GM12878 (cell line): ENCODE measurements at regions of chr16 and their contacts with region 1.

Region 1: GRCh38 chr16:57576429-57576870 is 34.0 kb downstream of the ADGRG5 start:
- DNase-seq: peak; percentile 26
- ATAC-seq: peak; percentile 95
- H3K4me3 ChIP-seq: no peak overlapping the region
- H3K27ac ChIP-seq: no peak overlapping the region
- H3K4me1 ChIP-seq: no peaks in the 10 kb centered on the region
- H3K27me3 ChIP-seq: no peaks in the 10 kb centered on the region
- CTCF ChIP-seq: peak; percentile 98 to 100 (median 99); a peak in 5 of 6 replicates
- EP300 ChIP-seq: no peak
- POLR2A ChIP-seq: peak; percentile 60
- RAD21 ChIP-seq: peak; percentile 97

Region 2: GRCh38 chr16:57544119-57544653 is 32.3 kb before region 1 on chr16:
- CTCF ChIA-PET with region 1: interaction called, 23 read pairs
- POLR2A ChIA-PET with region 1: no interaction called
- RAD21 ChIA-PET with region 1: interaction called, 15 read pairs
- SMC1A ChIA-PET with region 1: interaction called, 23 read pairs
- in situ Hi-C with region 1: no loop called
- intact Hi-C with region 1: no loop called
- DNase-seq: peak; percentile 95
- ATAC-seq: peak; percentile 81
- H3K4me3 ChIP-seq: peak overlapping the region; percentile 98
- H3K27ac ChIP-seq: peak overlapping the region; percentile 94
- H3K4me1 ChIP-seq: peaks cover 43% of the 10 kb centered on the region
- H3K27me3 ChIP-seq: no peaks in the 10 kb centered on the region
- CTCF ChIP-seq: no peak
- EP300 ChIP-seq: peak; percentile 99 to 100
- POLR2A ChIP-seq: peak; percentile 82
- RAD21 ChIP-seq: peak; percentile 23

Region 3: GRCh38 chr16:57564571-57565270 is 11.7 kb before region 1 on chr16:
- CTCF ChIA-PET with region 1: interaction called, 10 read pairs
- POLR2A ChIA-PET with region 1: no interaction called
- RAD21 ChIA-PET with region 1: no interaction called
- SMC1A ChIA-PET with region 1: interaction called, 3 read pairs
- in situ Hi-C with region 1: no loop called
- intact Hi-C with region 1: no loop called
- DNase-seq: no peak
- ATAC-seq: no peak
- H3K4me3 ChIP-seq: no peak overlapping the region
- H3K27ac ChIP-seq: no peak overlapping the region
- H3K4me1 ChIP-seq: no peaks in the 10 kb centered on the region
- H3K27me3 ChIP-seq: no peaks in the 10 kb centered on the region; a peak in 1 of 4 replicates
- CTCF ChIP-seq: no peak
- EP300 ChIP-seq: no peak
- POLR2A ChIP-seq: no peak
- RAD21 ChIP-seq: no peak

Region 4: GRCh38 chr16:57600048-57600835 is 23.8 kb after region 1 on chr16:
- CTCF ChIA-PET with region 1: interaction called, 58 read pairs
- POLR2A ChIA-PET with region 1: interaction called, 5 read pairs
- RAD21 ChIA-PET with region 1: interaction called, 32 read pairs
- SMC1A ChIA-PET with region 1: interaction called, 12 read pairs
- in situ Hi-C with region 1: no loop called
- intact Hi-C with region 1: no loop called
- DNase-seq: no peak
- ATAC-seq: peak; percentile 73
- H3K4me3 ChIP-seq: no peak overlapping the region
- H3K27ac ChIP-seq: peak overlapping the region; percentile 79; the same call in 1 of the 2 replicates
- H3K4me1 ChIP-seq: peaks cover 31% of the 10 kb centered on the region
- H3K27me3 ChIP-seq: no peaks in the 10 kb centered on the region
- CTCF ChIP-seq: peak; percentile 73 to 88 (median 87)
- EP300 ChIP-seq: no peak
- POLR2A ChIP-seq: no peak
- RAD21 ChIP-seq: peak; percentile 80

Region 5: GRCh38 chr16:57628008-57628781 is 51.7 kb after region 1 on chr16 and contains the start of gene ADGRG1:
- CTCF ChIA-PET with region 1: no interaction called
- POLR2A ChIA-PET with region 1: no interaction called
- RAD21 ChIA-PET with region 1: no interaction called
- SMC1A ChIA-PET with region 1: no interaction called
- in situ Hi-C with region 1: no loop called
- intact Hi-C with region 1: no loop called
- DNase-seq: no peak
- ATAC-seq: peak; percentile 55
- H3K4me3 ChIP-seq: no peak within 1 kb of the TSS
- H3K27ac ChIP-seq: no peak within 1 kb of the TSS
- H3K4me1 ChIP-seq: no peaks in the 10 kb centered on the region
- H3K27me3 ChIP-seq: peaks cover 0 to 3% of the 10 kb centered on the region in 2 experiments; a peak in 3 of 4 replicates
- CTCF ChIP-seq: peak in 1 of 3 experiments; percentile 12; a peak in 1 of 6 replicates
- EP300 ChIP-seq: no peak
- POLR2A ChIP-seq: no peak
- RAD21 ChIP-seq: peak; percentile 5; the same call in 1 of the 2 replicates
- polyA plus RNA-seq, gene ADGRG1: 0.16 to 0.23 TPM

Region 6: GRCh38 chr16:57648590-57649442 is 72.4 kb after region 1 on chr16:
- CTCF ChIA-PET with region 1: interaction called, 118 read pairs
- POLR2A ChIA-PET with region 1: interaction called, 4 read pairs
- RAD21 ChIA-PET with region 1: interaction called, 36 read pairs
- SMC1A ChIA-PET with region 1: interaction called, 54 read pairs
- in situ Hi-C with region 1: no loop called
- intact Hi-C with region 1: loop called (anchors 1 kb)
- DNase-seq: peak; percentile 52
- ATAC-seq: peak; percentile 83
- H3K4me3 ChIP-seq: no peak overlapping the region
- H3K27ac ChIP-seq: peak overlapping the region; percentile 13; the same call in 1 of the 2 replicates
- H3K4me1 ChIP-seq: peaks cover 19% of the 10 kb centered on the region
- H3K27me3 ChIP-seq: no peaks in the 10 kb centered on the region
- CTCF ChIP-seq: peak; percentile 100; a peak in 5 of 6 replicates
- EP300 ChIP-seq: no peak
- POLR2A ChIP-seq: no peak
- RAD21 ChIP-seq: peak; percentile 99

Region 7: DNA sequence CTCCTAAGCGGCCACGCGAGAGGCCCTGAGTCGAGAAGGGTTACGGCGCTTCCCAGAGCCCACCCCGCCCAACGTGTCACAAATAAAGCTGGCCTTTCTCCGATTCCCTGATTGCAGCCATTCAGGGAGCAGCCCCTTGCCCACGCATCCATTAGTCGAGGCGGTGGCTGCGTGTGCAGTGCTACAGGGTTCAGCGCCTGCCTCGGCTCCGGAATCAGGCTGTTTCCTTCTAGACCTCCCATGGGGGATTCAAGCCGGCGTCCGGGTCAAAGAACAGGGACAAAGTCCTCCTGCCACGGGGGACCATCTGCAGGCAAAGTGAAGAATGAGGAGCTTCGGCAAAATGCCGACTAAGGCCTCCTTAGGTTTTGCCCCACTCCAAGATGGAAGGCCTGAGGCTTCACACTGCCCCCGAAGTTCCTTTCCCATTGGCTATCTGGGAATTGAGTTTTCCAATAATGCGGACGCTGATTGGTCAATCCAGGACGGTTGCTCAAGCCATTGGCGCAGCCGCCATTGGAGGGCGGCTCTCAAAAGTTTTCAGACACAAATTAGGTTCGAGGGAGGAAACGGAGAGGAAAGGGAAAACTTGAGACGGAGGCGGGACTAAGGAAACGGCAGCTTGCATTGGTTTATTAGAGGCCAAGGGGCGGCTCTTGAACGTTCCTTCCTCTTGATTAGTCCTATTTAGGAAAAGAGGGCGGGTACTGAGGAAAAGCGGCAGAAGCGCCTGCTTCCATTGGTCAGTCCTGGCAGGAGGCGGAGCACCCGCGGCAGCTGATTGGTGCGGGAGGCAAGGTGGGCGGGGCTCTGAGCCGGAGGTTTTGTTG is 158.7 kb after region 1 on chr16:
- CTCF ChIA-PET with region 1: interaction called, 20 read pairs
- POLR2A ChIA-PET with region 1: no interaction called
- RAD21 ChIA-PET with region 1: interaction called, 3 read pairs
- SMC1A ChIA-PET with region 1: interaction called, 7 read pairs
- in situ Hi-C with region 1: no loop called
- intact Hi-C with region 1: loop called (anchors 5 kb)
- DNase-seq: peak; percentile 99
- ATAC-seq: peak; percentile 95
- H3K4me3 ChIP-seq: peak overlapping the region; percentile 83
- H3K27ac ChIP-seq: peak overlapping the region; percentile 96
- H3K4me1 ChIP-seq: peaks cover 10% of the 10 kb centered on the region
- H3K27me3 ChIP-seq: no peaks in the 10 kb centered on the region
- CTCF ChIP-seq: no peak
- EP300 ChIP-seq: no peak
- POLR2A ChIP-seq: peak; percentile 75
- RAD21 ChIP-seq: no peak